ENCODE measurements at regions of chr17 and their contacts with region 1.

Region 1: DNA sequence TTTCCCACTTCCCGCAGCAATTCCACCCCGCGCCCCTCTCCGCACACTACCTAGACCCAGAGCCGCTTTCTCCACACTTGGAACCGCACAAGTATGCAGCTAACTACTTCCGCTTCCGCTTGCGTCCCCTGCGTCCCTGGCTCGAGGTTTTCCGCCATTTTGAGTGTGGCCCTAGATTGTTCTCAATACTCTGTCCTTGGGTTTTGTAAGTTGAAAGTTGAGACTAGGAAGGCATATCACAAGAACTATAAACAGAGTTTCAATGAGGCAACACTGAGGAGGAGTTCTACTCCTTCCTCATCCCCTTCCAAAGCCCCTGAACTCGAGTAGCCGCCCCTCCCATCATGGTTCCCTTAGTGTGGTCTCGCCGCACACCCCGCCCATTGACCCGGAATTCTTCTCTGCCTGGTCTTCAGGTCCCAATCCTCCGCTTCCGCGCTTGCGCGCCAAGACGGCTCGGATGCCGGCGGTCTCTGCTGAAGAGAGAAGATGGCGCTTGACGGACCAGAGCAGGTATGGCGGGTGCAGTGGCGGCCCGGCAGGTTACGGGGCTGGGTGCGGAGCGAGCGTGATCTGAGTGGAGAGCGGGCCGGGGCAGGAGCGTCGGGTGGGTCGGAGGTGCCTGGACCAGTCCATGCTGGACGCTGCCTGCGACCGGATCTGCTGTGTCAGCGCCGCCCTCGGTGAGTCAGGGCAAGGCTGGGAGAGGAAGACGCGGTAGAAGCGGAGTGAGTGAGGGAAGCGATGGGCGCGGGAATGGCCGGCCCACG is at the starts of genes FTSJ3 and PSMC5:
- DNase-seq: peak; percentile 97
- H3K4me3 ChIP-seq: peak within 1 kb of the TSS; percentile 47 to 81 (median 72)
- H3K27ac ChIP-seq: peak within 1 kb of the TSS; percentile 92
- H3K4me1 ChIP-seq: peaks cover 23% of the 10 kb centered on the region
- H3K27me3 ChIP-seq: no peaks in the 10 kb centered on the region
- CTCF ChIP-seq: peak in 1 of 2 donors; percentile 57
- POLR2A ChIP-seq: peak; percentile 77
- total RNA-seq, gene FTSJ3: 50.2 and 60.2 TPM in 2 replicates
- total RNA-seq, gene PSMC5: 179 TPM in 2 replicates

Region 2: GRCh38 chr17:62572888-62573401 is 1254.2 kb before region 1 on chr17:
- CTCF ChIA-PET with region 1: no interaction called
- POLR2A ChIA-PET with region 1: no interaction called
- dilution Hi-C with region 1: no loop called
- intact Hi-C with region 1: loop called (anchors 10 kb)
- DNase-seq: peak; percentile 86
- H3K4me3 ChIP-seq: peak overlapping the region in 2 of 3 experiments; percentile 10 to 38
- H3K27ac ChIP-seq: peak overlapping the region; percentile 94
- H3K4me1 ChIP-seq: peaks cover 28% of the 10 kb centered on the region
- H3K27me3 ChIP-seq: no peaks in the 10 kb centered on the region
- CTCF ChIP-seq: no peak
- POLR2A ChIP-seq: no peak

Region 3: DNA sequence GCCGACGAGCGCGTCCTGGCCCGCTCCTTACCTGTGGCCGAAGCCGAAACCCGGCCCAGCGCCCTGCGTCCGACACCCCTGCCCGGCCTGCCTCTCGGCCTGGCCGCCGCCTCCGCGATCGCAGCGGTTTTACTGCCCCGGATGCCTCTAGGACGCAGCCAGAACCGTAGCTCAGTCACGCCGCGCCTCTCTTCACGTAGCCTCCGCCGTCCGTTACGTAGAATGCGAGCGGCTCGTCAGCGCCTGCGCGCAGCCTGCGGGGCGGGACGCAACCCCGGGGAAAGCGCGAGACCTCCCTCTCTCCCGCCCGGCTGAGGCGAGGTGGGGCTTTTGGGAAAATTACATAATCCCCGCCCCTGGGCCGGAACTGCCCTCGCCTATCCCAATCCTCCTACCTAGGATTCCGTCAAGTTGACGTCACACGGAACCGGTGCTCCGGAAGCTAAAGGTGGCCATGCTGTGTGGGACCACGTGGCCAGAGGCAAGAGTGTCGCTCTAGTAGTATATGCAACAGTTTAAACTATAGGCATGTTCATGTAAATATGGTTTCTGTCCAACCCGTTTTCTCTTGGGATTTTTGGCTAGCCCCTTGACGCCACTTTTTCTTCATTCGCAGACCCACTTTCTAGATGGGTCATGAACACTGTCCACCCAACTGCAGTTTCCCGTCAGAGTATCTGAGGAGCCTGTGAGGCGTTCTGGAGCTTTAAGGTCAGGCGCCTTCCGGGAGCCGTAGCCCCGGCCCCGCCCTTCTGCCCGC is 53.6 kb before region 1 on chr17 and contains the start of gene CCDC47:
- CTCF ChIA-PET with region 1: no interaction called
- POLR2A ChIA-PET with region 1: no interaction called
- dilution Hi-C with region 1: no loop called
- intact Hi-C with region 1: loop called (anchors 1 kb)
- DNase-seq: peak; percentile 99
- H3K4me3 ChIP-seq: peak within 1 kb of the TSS; percentile 77 to 94 (median 94)
- H3K27ac ChIP-seq: peak within 1 kb of the TSS; percentile 78
- H3K4me1 ChIP-seq: peaks cover 15% of the 10 kb centered on the region
- H3K27me3 ChIP-seq: no peaks in the 10 kb centered on the region
- CTCF ChIP-seq: no peak
- POLR2A ChIP-seq: peak; percentile 89
- total RNA-seq, gene CCDC47: 73.9 and 76.5 TPM in 2 replicates

Region 4: GRCh38 chr17:63785556-63785955 is 41.6 kb before region 1 on chr17:
- CTCF ChIA-PET with region 1: no interaction called
- POLR2A ChIA-PET with region 1: no interaction called
- dilution Hi-C with region 1: no loop called
- intact Hi-C with region 1: no loop called
- DNase-seq: peak; percentile 39
- H3K4me3 ChIP-seq: no peak overlapping the region
- H3K27ac ChIP-seq: no peak overlapping the region
- H3K4me1 ChIP-seq: peaks cover 6% of the 10 kb centered on the region
- H3K27me3 ChIP-seq: no peaks in the 10 kb centered on the region
- CTCF ChIP-seq: no peak
- POLR2A ChIP-seq: no peak

Region 5: DNA sequence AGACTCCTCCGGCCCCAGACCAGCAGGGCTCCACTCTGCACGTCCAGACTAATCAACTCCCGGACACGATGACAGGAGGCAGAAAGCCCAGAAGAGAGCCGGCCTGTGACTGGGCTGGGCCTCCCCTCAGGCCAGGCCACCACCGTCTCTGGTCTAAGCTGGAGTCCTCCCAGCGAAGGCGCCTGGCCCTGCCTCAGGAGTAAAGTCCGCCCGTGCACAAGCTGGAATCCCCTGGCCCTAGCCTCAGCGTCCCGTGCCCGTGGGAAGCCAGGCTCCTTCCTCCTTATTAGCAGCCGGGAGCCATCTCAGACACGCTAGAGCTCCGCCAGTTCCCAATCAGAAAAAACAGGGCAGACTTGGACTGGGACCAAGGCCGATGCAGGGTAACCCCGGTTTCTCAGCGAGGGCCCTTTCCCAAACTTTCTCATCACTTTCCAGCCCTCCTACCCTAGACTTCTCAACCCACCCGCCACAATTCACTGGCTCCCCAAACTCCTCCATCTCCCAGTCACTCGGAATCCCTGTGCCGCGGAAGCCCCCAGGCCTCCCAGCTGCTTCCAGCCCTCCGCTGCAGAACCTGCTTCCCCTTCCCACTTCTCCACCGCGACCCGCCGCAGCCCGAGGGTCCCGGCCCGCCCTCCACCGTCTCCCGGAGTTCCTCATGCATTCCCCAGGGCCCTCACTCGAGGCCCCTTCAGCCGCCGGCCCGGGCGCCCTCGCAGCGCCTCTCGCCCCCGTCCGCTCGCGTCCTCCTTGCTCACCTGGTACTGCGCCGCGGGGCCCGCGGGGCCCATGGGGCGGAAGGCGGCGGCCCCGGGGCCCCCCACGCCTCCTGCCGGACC is 14.7 kb after region 1 on chr17:
- CTCF ChIA-PET with region 1: interaction called, 3 read pairs
- POLR2A ChIA-PET with region 1: no interaction called
- dilution Hi-C with region 1: no loop called
- intact Hi-C with region 1: loop called (anchors 1 kb)
- DNase-seq: peak; percentile 56
- H3K4me3 ChIP-seq: peak overlapping the region; percentile 56 to 86 (median 77)
- H3K27ac ChIP-seq: peak overlapping the region; percentile 38
- H3K4me1 ChIP-seq: peaks cover 24% of the 10 kb centered on the region
- H3K27me3 ChIP-seq: no peaks in the 10 kb centered on the region
- CTCF ChIP-seq: no peak
- POLR2A ChIP-seq: no peak

Measured in endothelial cell of umbilical vein (primary cell).